Calu3 (cell line): ENCODE measurements at regions of chr2 and their contacts with region 1.

Region 1: DNA sequence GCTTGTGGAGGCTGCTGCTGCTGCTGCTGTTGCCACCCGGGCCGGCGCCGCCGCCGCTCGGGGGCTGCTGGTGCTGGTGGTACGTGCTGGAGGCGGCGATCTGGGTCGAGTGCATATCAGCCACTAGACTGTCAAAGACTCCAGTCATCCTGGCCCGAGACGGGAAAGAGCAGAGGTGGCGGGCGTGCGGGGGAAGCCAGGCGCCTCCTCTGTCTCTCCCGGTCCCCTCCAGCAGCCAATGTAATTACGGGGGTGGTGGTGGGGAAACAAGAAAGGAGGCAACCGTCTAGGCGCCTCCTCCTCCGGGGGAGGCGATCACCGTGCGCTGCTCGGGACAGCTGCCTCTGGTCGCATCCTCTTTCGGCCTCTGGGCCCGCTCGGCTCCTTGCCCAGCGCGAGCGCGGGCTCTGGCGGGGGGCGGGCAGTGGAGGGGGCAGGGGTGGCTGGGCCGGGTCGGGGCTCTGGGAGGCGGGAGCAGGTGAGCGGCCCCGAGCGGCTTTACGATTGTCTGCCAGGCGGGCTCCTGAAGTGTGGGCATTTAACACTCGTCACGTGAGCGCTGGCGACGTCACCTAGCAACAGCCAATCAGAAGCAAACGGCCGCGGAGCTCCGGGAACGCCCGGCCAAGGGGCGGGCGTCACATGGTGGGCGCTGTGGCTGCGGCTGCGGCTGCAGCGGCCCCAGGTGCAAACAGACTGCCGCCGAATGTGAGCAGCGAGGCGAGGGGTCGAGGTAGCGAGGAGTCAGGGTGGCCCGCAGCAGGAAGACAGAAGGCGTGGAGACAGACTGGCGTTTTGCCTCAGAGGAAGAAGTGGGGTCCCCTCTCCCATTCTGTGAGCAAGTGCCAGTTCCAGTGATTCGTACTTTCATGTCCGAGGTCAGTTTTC is at the start of gene DLX2:
- DNase-seq: peak; percentile 79
- H3K4me3 Mint-ChIP-seq: peak within 1 kb of the TSS; percentile 98
- H3K27ac Mint-ChIP-seq: peak within 1 kb of the TSS; percentile 83
- H3K4me1 Mint-ChIP-seq: peaks cover 39% of the 10 kb centered on the region
- H3K27me3 Mint-ChIP-seq: peaks cover 64% of the 10 kb centered on the region
- CTCF ChIP-seq: no peak
- total RNA-seq, gene DLX2: not detected in 2 replicates

Region 2: GRCh38 chr2:170113171-170113894 is 1989.3 kb before region 1 on chr2:
- CTCF ChIA-PET with region 1: no interaction called
- intact Hi-C with region 1: no loop called
- DNase-seq: no peak
- H3K4me3 Mint-ChIP-seq: no peak overlapping the region
- H3K27ac Mint-ChIP-seq: no peak overlapping the region
- H3K4me1 Mint-ChIP-seq: no peaks in the 10 kb centered on the region
- H3K27me3 Mint-ChIP-seq: no peaks in the 10 kb centered on the region
- CTCF ChIP-seq: no peak

Region 3: DNA sequence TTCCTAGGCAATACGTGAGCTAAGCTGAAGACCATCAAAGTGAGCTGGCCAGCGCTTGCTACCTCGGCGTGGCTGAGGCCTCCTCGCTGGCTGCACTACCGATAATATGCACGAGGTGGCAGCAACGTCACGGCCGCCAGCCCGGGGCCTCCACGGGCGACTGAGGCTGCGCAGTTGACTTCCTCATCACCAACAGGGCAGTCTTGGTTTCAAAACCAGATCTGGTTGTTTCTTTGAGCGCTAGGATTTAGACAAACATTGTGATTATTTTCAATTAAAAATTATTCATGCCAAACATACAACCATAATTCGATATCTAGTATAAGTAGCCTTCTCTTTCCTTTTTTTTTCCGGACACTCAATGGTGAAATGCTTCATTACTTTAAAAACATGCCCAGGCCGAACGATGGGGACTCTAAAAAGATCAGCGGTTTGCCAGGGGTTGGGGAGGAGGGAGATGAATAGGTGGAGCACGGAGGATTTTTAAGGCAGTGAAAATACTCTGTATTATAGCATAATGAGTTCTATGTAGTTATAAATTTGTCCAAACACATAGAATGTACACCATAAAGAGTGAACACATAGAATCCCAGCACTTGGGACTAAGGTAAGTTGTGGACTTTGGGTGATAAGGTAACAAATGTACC is 528.4 kb before region 1 on chr2:
- CTCF ChIA-PET with region 1: no interaction called
- intact Hi-C with region 1: loop called (anchors 5 kb)
- DNase-seq: peak; percentile 88
- H3K4me3 Mint-ChIP-seq: no peak overlapping the region
- H3K27ac Mint-ChIP-seq: no peak overlapping the region
- H3K4me1 Mint-ChIP-seq: no peaks in the 10 kb centered on the region
- H3K27me3 Mint-ChIP-seq: peaks cover 15% of the 10 kb centered on the region
- CTCF ChIP-seq: peak; percentile 90

Region 4: DNA sequence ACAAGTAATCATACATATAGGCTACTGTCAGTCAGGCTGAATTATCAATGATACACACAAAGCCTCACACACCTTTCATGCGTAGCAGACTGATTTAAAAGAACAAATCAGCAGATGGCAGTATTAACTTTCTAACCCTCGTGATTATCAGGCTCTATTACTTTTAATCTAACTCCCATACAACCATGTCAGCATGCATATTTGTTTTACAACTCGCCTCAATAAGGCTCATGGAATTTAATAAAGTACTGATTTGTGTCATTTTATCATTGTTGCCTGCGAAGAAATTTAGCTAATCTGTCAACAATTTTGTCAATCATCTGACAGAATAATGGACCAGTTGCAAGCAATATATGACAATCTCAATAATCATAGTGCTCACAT is 291.4 kb before region 1 on chr2:
- CTCF ChIA-PET with region 1: interaction called, 3 read pairs
- intact Hi-C with region 1: loop called (anchors 2 kb)
- DNase-seq: no peak
- H3K4me3 Mint-ChIP-seq: no peak overlapping the region
- H3K27ac Mint-ChIP-seq: no peak overlapping the region
- H3K4me1 Mint-ChIP-seq: no peaks in the 10 kb centered on the region
- H3K27me3 Mint-ChIP-seq: no peaks in the 10 kb centered on the region
- CTCF ChIP-seq: no peak

Region 5: DNA sequence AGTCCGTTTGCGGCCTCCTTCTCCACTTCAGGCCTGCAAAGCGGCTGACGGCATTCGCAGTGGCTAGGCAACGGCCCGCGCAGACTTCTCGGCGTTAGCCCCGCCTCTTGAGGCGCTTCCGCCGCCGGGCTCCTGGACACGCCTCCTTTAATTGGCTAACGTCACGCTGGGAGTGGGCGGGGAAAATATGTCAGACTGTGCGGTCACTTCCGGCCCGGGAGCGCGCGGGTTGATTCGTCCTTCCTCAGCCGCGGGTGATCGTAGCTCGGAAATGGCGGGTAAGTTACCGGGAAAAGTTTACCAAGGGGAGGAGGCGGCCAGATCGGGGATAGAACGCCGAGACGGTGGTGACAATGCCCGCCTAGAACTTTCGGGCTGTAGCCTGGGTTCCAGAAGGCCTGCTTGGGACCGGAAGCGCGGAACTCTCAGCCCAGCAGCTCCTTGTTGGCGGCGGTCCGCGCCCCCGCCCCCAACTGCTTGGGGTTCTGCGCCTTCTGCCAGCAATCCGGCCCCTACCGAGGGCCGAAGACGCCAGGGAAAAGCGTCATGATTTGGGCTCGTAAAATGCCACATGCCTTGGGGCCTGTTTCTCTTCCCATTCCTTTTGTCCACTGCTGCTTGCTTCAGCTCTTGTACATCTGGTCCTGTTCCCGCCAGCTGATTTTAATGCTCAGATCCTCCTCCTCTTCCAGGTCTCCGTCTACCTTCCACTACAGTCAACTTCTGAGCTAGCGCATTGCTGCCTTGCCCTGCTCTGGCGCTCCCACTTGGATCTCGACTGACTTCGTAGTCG is 180.2 kb before region 1 on chr2 and contains the start of gene HAT1:
- CTCF ChIA-PET with region 1: interaction called, 3 read pairs
- intact Hi-C with region 1: loop called (anchors 10 kb)
- DNase-seq: peak; percentile 97
- H3K4me3 Mint-ChIP-seq: peak within 1 kb of the TSS; percentile 88
- H3K27ac Mint-ChIP-seq: peak within 1 kb of the TSS; percentile 88
- H3K4me1 Mint-ChIP-seq: peaks cover 18% of the 10 kb centered on the region
- H3K27me3 Mint-ChIP-seq: no peaks in the 10 kb centered on the region
- CTCF ChIP-seq: no peak
- total RNA-seq, gene HAT1: 58.2 and 64.3 TPM in 2 replicates

Region 6: GRCh38 chr2:172131713-172132555 is 29.3 kb after region 1 on chr2:
- CTCF ChIA-PET with region 1: interaction called, 10 read pairs
- intact Hi-C with region 1: no loop called
- DNase-seq: no peak
- H3K4me3 Mint-ChIP-seq: no peak overlapping the region
- H3K27ac Mint-ChIP-seq: no peak overlapping the region
- H3K4me1 Mint-ChIP-seq: no peaks in the 10 kb centered on the region
- H3K27me3 Mint-ChIP-seq: no peaks in the 10 kb centered on the region
- CTCF ChIP-seq: no peak

Region 7: GRCh38 chr2:172270278-172271079 is 167.8 kb after region 1 on chr2:
- CTCF ChIA-PET with region 1: no interaction called
- intact Hi-C with region 1: no loop called
- DNase-seq: no peak
- H3K4me3 Mint-ChIP-seq: no peak overlapping the region
- H3K27ac Mint-ChIP-seq: no peak overlapping the region
- H3K4me1 Mint-ChIP-seq: no peaks in the 10 kb centered on the region
- H3K27me3 Mint-ChIP-seq: no peaks in the 10 kb centered on the region
- CTCF ChIP-seq: no peak